ENCODE measurements at regions of chr2 and their contacts with region 1.

Region 1: GRCh38 chr2:152025678-152026287 is 73.1 kb downstream of the CACNB4 start:
- DNase-seq: peak; percentile 81
- H3K4me3 ChIP-seq: peak overlapping the region; percentile 29
- H3K27ac ChIP-seq: no peak overlapping the region
- H3K27me3 ChIP-seq: no peaks in the 10 kb centered on the region
- CTCF ChIP-seq: peak; percentile 99

Region 2: GRCh38 chr2:152166633-152167032 is 140.8 kb after region 1 on chr2:
- in situ Hi-C with region 1: loop called (anchors 25 kb)
- DNase-seq: no peak
- H3K4me3 ChIP-seq: no peak overlapping the region
- H3K27ac ChIP-seq: peak overlapping the region; percentile 41
- H3K27me3 ChIP-seq: no peaks in the 10 kb centered on the region
- CTCF ChIP-seq: no peak

Region 3: DNA sequence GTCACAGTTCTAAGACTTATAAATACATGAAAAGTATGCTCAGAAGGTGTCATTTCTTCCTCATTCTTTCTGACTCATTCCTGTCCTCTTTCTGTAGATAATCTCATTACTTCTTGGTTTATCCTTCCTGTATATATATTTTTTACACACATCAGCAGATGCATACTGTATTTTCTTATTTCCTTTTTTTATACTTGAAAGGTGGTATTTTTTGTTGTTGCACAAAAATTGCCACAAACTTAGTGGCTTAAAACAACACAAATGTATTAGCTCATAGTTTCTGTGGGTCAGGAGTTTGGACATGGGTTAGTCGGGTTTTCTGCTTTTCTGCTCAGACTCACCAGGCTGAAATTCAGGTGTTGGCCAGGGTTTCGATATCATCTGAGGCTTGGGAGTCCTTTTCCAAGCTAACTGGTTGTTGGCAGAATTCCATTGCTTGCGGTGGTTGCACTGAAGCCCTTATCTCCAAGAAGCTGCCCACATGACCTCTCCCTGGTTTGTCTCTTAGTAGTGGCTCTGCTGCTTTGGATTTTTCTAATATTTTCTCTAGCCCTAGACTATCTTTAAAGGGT is 471.8 kb after region 1 on chr2:
- in situ Hi-C with region 1: no loop called
- DNase-seq: peak; percentile 81
- H3K4me3 ChIP-seq: no peak overlapping the region
- H3K27ac ChIP-seq: no peak overlapping the region
- H3K27me3 ChIP-seq: no peaks in the 10 kb centered on the region
- CTCF ChIP-seq: no peak